Calu3 (cell line): ENCODE measurements at regions of chr11 and their contacts with region 1.

Region 1: DNA sequence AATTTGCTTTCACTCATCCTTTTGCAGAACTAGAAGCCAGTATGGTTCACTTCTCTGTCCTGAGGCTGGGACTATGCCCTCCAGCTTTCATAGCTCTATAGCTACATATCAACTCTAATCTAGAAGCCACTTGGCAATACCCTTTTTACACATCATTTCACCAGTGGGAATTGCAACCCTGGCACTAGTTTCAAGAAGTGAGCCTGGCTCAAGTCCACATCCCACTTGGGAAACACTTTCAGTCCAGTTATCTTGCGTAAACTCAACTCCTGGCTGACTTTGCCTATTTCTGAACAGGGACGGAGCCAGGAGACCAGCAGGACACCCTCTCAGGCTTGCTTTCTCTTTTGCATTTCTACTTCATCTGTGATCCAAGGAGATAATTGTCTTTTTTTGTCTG is 19.9 kb upstream of the FAT3 start:
- DNase-seq: no peak
- H3K4me3 Mint-ChIP-seq: no peak overlapping the region
- H3K27ac Mint-ChIP-seq: no peak overlapping the region
- H3K4me1 Mint-ChIP-seq: peaks cover 8% of the 10 kb centered on the region
- H3K27me3 Mint-ChIP-seq: no peaks in the 10 kb centered on the region
- CTCF ChIP-seq: no peak

Region 2: DNA sequence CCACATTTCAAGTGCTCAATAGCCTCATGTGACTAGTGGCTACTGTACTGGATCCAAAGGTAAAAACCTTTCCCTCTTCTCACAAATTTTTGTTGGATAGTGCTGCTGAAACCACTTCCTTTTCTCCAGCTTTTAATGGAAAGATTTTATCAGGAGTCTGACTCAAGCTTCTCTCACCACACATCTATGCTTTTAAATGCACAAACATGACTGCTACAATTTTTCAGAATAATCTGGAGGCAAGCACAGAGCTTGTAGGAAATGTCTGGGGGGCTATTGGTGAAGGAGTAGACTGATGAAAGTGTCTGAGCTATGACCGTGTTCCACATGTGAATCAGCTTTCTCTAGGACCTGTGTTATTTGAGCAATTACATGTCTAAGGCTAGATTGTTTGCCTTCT is 81.2 kb before region 1 on chr11:
- CTCF ChIA-PET with region 1: no interaction called
- intact Hi-C with region 1: no loop called
- DNase-seq: no peak
- H3K4me3 Mint-ChIP-seq: no peak overlapping the region
- H3K27ac Mint-ChIP-seq: no peak overlapping the region
- H3K4me1 Mint-ChIP-seq: no peaks in the 10 kb centered on the region
- H3K27me3 Mint-ChIP-seq: no peaks in the 10 kb centered on the region
- CTCF ChIP-seq: no peak

Region 3: GRCh38 chr11:92190535-92191206 is 14.1 kb before region 1 on chr11:
- CTCF ChIA-PET with region 1: interaction called, 13 read pairs
- intact Hi-C with region 1: no loop called
- DNase-seq: no peak
- H3K4me3 Mint-ChIP-seq: no peak overlapping the region
- H3K27ac Mint-ChIP-seq: no peak overlapping the region
- H3K4me1 Mint-ChIP-seq: no peaks in the 10 kb centered on the region
- H3K27me3 Mint-ChIP-seq: no peaks in the 10 kb centered on the region
- CTCF ChIP-seq: no peak